Heart right ventricle (tissue), 16 donors: ENCODE measurements at regions of chr3 and their contacts with region 1.

Region 1: DNA sequence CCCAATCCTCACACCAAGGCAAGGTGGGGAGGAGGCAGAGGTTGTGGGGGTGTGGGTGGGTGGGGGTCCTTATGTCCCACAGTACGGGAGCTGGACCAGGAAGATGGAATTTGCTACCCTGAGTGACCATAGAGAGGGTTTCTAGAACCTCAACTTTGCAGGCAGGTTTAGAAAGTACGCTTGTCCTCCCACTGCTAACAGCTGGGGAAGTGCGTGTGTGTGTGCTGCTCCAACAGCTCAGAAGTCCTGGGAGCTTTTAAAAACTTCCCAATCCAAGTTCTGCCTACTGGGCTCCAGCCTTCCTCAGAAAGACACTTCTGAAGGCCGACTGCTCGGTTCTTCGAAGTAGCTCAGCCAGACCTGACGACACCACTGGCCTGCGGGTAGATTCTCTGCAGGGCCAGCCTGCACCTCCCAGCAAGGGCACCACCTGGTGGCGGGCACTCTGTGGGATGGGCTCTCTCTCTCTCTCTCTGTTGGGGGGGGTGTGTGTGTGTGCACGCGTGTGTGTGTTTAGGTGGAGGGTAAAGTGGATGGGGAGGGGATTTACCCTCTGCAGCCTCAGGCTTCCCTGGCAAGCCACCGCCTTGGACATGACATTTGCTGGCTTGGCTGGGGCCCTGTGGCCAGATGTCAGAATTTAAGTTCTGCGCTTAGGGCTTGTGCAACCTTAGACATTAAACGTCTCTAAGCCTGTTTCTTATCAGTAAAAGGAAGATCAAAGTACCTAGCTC is 15.6 kb downstream of the TMEM158 start:
- DNase-seq: peak; percentile 75 to 83
- ATAC-seq: peak; percentile 94 to 98 (median 96)
- H3K4me3 ChIP-seq: no peak overlapping the region
- H3K27ac ChIP-seq: no peak overlapping the region
- H3K4me1 ChIP-seq: peaks cover 0 to 9% (median 0%) of the 10 kb centered on the region in 9 donors
- H3K27me3 ChIP-seq: peaks cover 0 to 10% (median 5%) of the 10 kb centered on the region in 7 donors
- CTCF ChIP-seq: peak; percentile 37 to 80 (median 72)

Region 2: GRCh38 chr3:45037734-45038455 is 172.6 kb before region 1 on chr3:
- intact Hi-C with region 1: loop called (anchors 1 to 5 kb)
- DNase-seq: peak; percentile 86 to 93
- ATAC-seq: peak; percentile 63 to 86 (median 82)
- H3K4me3 ChIP-seq: peak overlapping the region in 2 of 10 donors; percentile 24 to 26
- H3K27ac ChIP-seq: peak overlapping the region in 5 of 10 donors; percentile 25 to 62 (median 32)
- H3K4me1 ChIP-seq: peaks cover 3 to 62% (median 33%) of the 10 kb centered on the region in 9 donors
- H3K27me3 ChIP-seq: no peaks in the 10 kb centered on the region
- CTCF ChIP-seq: peak; percentile 80 to 94 (median 89)